MCF 10A (cell line): ENCODE measurements at regions of chr2 and their contacts with region 1.

Region 1: GRCh38 chr2:69724540-69725159 is 17.3 kb upstream of the ANXA4 start:
- DNase-seq: peak; percentile 81
- H3K4me3 Mint-ChIP-seq: peak overlapping the region; percentile 37
- H3K27ac Mint-ChIP-seq: no peak overlapping the region
- H3K4me1 Mint-ChIP-seq: peaks cover 5% of the 10 kb centered on the region
- H3K27me3 Mint-ChIP-seq: no peaks in the 10 kb centered on the region
- CTCF ChIP-seq: peak; percentile 93

Region 2: DNA sequence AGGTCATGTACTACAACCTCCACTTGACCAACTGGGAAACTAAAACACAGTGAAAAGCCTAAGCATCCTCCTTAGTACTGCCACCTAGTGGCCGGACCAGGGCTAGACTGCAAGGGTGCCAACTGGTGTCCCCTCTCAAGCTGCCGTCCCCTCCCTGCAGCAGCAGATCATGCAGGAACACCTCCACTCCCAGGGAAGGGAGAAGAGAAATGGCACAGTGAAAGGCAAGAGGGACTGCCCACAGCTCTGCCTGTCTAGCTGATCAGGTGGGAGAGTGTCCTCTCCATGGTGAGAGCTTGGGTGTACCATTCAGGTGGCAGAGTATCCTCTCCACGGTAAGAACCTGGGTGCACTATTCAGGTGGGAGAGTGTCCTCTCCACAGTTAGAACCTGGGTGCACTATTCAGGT is 159.2 kb before region 1 on chr2:
- CTCF ChIA-PET with region 1: interaction called, 83 read pairs
- POLR2A ChIA-PET with region 1: no interaction called
- intact Hi-C with region 1: no loop called
- DNase-seq: peak; percentile 53
- H3K4me3 Mint-ChIP-seq: no peak overlapping the region
- H3K27ac Mint-ChIP-seq: no peak overlapping the region
- H3K4me1 Mint-ChIP-seq: peaks cover 31% of the 10 kb centered on the region
- H3K27me3 Mint-ChIP-seq: no peaks in the 10 kb centered on the region
- CTCF ChIP-seq: peak; percentile 47

Region 3: DNA sequence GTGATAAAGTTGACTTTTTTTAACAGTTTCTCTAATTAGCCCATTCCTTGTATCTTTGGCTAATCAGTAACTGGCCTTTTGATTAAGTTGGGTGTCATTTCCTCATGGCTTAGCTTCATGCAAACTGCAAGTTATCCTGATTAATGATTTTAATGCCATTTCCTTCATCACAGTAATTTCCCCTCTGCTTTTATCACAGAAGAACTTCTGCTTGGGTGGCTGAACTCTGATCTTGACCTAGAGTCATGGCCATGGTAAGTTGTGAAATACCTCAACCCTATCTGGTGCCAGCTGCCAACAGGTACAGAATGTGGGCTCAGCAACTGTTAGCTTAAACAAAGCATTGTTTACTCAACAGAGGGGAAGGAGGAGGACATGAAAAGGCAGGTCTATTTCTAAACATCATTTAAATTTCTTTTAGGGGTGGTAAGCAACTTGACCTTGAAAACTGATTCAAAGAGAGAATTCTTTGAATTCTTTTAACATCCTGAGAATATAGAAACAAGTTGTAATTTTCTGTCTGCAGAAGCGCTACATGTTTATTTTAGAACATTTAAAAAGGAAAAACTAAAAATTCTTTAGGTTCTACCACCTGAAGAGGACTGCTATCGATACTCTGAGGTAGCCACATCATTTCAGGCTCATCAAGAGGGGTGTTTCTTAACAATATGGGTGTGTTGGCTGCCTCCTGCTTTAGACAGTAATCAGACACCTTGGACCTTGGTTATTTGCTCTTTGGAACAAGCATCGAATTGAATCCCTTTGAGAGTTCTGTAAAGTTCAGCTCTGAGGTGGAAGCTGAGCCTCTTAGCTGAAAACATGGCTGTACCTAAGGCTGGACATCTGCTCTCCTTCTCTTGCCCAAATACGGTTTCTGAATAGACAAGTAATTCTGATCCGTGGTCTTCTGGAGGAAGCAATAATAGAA is 56.9 kb after region 1 on chr2:
- CTCF ChIA-PET with region 1: interaction called, 15 read pairs
- POLR2A ChIA-PET with region 1: interaction called, 6 read pairs
- intact Hi-C with region 1: no loop called
- DNase-seq: peak; percentile 57
- H3K4me3 Mint-ChIP-seq: no peak overlapping the region
- H3K27ac Mint-ChIP-seq: peak overlapping the region; percentile 10
- H3K4me1 Mint-ChIP-seq: peaks cover 27% of the 10 kb centered on the region
- H3K27me3 Mint-ChIP-seq: no peaks in the 10 kb centered on the region
- CTCF ChIP-seq: no peak

Region 4: DNA sequence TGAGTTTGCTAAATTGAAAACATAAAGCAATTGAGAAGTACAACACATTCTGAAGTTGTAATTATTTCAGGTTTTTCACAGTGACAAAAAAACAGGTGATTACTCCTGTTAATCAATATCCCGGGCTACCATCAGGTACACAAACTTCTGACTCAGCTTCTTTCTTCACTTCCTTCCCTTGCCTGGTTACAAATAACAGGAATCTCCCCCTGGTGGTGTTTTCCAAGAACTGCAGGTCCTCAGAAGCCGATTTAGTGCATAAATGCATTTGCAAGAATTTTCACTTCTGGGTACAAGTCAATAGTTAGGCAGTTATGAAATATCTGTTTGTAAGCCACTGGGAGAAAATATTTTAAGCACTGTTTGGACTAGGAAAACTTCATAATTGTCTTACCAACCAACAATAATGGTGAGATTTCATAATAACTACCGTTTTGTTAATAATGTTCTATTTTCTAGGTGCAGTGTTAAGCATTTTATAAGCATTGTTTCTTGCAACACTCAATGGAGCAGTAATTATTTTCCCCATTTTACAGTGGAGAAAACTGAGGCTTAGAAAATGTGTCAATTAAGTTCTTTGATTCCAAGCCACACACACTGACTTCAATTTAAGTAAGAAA is 92.4 kb after region 1 on chr2:
- CTCF ChIA-PET with region 1: interaction called, 277 read pairs
- POLR2A ChIA-PET with region 1: interaction called, 49 read pairs
- intact Hi-C with region 1: loop called (anchors 1 kb)
- DNase-seq: peak; percentile 86
- H3K4me3 Mint-ChIP-seq: no peak overlapping the region
- H3K27ac Mint-ChIP-seq: no peak overlapping the region
- H3K4me1 Mint-ChIP-seq: no peaks in the 10 kb centered on the region
- H3K27me3 Mint-ChIP-seq: no peaks in the 10 kb centered on the region
- CTCF ChIP-seq: peak; percentile 79

Region 5: GRCh38 chr2:69893684-69894551 is 169.3 kb after region 1 on chr2 and contains the start of gene SNRNP27:
- CTCF ChIA-PET with region 1: interaction called, 6 read pairs
- POLR2A ChIA-PET with region 1: interaction called, 10 read pairs
- intact Hi-C with region 1: loop called (anchors 1 kb)
- DNase-seq: peak; percentile 82
- H3K4me3 Mint-ChIP-seq: peak within 1 kb of the TSS; percentile 99
- H3K27ac Mint-ChIP-seq: peak within 1 kb of the TSS; percentile 100
- H3K4me1 Mint-ChIP-seq: peaks cover 18% of the 10 kb centered on the region
- H3K27me3 Mint-ChIP-seq: no peaks in the 10 kb centered on the region
- CTCF ChIP-seq: no peak
- total RNA-seq, gene SNRNP27: 68.9 and 81.0 TPM in 2 replicates